ENCODE measurements at regions of chr2 and their contacts with region 1.

Region 1: GRCh38 chr2:157245846-157246764 is 11.4 kb upstream of the GALNT5 start:
- DNase-seq: peak; percentile 79
- H3K4me3 Mint-ChIP-seq: peak overlapping the region; percentile 10
- H3K27ac Mint-ChIP-seq: peak overlapping the region; percentile 96
- H3K4me1 Mint-ChIP-seq: peaks cover 27% of the 10 kb centered on the region
- H3K27me3 Mint-ChIP-seq: no peaks in the 10 kb centered on the region
- CTCF ChIP-seq: no peak

Region 2: DNA sequence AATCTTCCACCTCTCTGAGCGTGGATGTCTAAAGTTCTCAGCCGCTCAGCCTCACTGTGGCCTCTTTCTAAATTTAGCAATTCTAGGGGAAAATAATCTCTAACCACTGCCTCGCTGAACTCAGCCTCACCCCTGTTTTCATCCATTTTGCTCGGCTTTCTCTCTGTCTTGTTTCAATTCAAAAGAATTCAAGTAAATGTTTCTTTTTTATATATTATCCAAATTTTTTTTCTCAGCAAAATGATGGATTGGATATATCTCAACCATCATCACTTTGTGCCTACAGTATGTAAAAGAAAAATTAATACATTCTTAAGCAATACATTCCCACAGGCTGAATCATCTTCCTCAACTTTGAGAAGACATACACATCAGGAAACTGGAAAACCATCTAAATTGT is 12.6 kb before region 1 on chr2:
- CTCF ChIA-PET with region 1: interaction called, 4 read pairs
- POLR2A ChIA-PET with region 1: interaction called, 31 read pairs
- intact Hi-C with region 1: no loop called
- DNase-seq: peak; percentile 25
- H3K4me3 Mint-ChIP-seq: no peak overlapping the region
- H3K27ac Mint-ChIP-seq: peak overlapping the region; percentile 4
- H3K4me1 Mint-ChIP-seq: peaks cover 34% of the 10 kb centered on the region
- H3K27me3 Mint-ChIP-seq: no peaks in the 10 kb centered on the region
- CTCF ChIP-seq: no peak

Region 3: GRCh38 chr2:157261199-157261783 is 15.2 kb after region 1 on chr2:
- CTCF ChIA-PET with region 1: interaction called, 3 read pairs
- POLR2A ChIA-PET with region 1: interaction called, 30 read pairs
- intact Hi-C with region 1: no loop called
- DNase-seq: peak; percentile 61
- H3K4me3 Mint-ChIP-seq: peak overlapping the region; percentile 43
- H3K27ac Mint-ChIP-seq: peak overlapping the region; percentile 71
- H3K4me1 Mint-ChIP-seq: peaks cover 14% of the 10 kb centered on the region
- H3K27me3 Mint-ChIP-seq: no peaks in the 10 kb centered on the region
- CTCF ChIP-seq: no peak